ENCODE measurements at regions of chr17 and their contacts with region 1.

Region 1: GRCh38 chr17:5329784-5330557 is 47.9 kb downstream of the RABEP1 start:
- DNase-seq: peak; percentile 11
- ATAC-seq: peak; percentile 37
- H3K4me3 ChIP-seq: no peak overlapping the region
- H3K27ac ChIP-seq: no peak overlapping the region
- H3K4me1 ChIP-seq: peaks cover 3% of the 10 kb centered on the region
- H3K27me3 ChIP-seq: no peaks in the 10 kb centered on the region
- CTCF ChIP-seq: no peak
- POLR2A ChIP-seq: no peak
- RAD21 ChIP-seq: no peak

Region 2: DNA sequence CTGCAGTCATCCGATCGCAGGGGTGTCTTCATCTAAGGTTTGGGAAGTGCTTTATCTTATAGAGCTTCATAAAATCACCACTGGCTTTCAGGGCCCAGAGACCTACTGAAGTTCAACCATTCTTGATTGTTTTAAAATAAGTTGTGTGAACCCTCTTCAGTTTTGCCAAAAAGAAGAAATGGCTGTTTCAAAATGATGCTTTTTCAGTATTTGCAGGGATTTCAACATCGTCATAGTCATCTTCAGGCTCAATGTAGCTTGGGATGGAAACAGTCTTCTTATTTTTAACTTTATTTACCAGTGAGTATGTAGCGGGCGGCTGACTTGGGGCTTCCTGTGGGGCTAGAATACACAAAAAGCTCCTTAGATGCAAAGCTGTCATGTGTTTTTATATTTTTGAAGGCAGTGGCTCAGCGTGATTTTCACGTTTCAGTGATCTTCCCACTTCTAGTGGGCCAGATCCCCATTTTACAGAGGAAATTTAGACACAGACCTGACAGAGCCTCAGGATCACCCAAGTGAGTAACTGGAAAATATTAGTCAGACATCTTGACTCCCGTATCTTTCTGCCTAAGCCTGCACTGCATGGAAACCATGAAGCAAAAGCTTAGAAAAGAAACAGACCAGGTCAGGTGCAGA is 119.2 kb before region 1 on chr17:
- CTCF ChIA-PET with region 1: no interaction called
- POLR2A ChIA-PET with region 1: no interaction called
- dilution Hi-C with region 1: no loop called
- in situ Hi-C with region 1: no loop called
- intact Hi-C with region 1: no loop called
- DNase-seq: no peak
- ATAC-seq: no peak
- H3K4me3 ChIP-seq: no peak overlapping the region
- H3K27ac ChIP-seq: no peak overlapping the region
- H3K4me1 ChIP-seq: no peaks in the 10 kb centered on the region
- H3K27me3 ChIP-seq: no peaks in the 10 kb centered on the region
- CTCF ChIP-seq: no peak
- POLR2A ChIP-seq: no peak
- RAD21 ChIP-seq: no peak

Region 3: GRCh38 chr17:5304636-5305035 is 25.3 kb before region 1 on chr17:
- CTCF ChIA-PET with region 1: interaction called, 10 read pairs
- POLR2A ChIA-PET with region 1: no interaction called
- dilution Hi-C with region 1: no loop called
- in situ Hi-C with region 1: no loop called
- intact Hi-C with region 1: no loop called
- DNase-seq: no peak
- ATAC-seq: no peak
- H3K4me3 ChIP-seq: no peak overlapping the region
- H3K27ac ChIP-seq: no peak overlapping the region
- H3K4me1 ChIP-seq: 0 out of 2 replicates have a peak, but pooled peaks cover 2% of the 10 kb centered on the region
- H3K27me3 ChIP-seq: no peaks in the 10 kb centered on the region
- CTCF ChIP-seq: no peak
- POLR2A ChIP-seq: no peak
- RAD21 ChIP-seq: no peak

Measured in IMR-90 (cell line).